ENCODE measurements at regions of chr2 and their contacts with region 1.

Region 1: DNA sequence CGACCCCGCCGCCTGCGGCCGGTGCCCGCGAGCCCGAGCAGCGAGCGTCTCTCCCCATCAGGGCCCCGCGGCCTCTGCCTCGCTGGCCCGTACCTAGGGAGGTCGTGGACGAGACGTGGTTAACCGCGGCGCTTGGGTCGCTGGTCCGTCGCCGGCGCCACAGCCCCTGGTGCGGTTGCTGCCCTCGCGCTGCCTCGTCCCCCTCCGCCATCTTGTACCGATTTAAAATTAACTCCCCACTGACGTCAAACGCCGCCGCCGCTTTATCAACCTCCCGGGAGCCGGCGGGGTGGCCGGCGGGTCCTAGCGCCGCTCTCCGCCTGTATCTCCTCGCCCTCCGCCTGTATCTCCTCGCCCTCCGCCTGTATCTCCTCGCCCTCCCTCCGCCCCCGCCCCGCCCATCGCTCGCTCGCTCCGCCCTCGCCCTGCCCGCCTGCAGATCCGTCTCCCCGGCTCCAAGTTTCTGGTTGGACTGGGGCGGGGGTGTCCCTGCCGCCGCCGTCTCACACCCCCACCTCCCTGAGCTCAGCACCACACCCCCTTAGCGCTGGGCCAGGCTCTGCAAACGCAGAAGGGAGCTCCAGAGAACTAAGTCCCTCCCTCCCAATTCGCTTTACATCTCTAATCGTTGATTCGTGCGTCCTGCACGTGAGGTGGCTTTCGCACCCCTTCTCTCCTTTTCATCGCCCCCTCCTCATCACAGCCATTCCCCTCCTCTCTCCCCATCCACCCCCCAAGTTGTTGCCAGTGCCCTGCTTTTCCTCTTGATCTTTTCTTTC is at the start of gene ATL2:
- DNase-seq: peak; percentile 91
- ATAC-seq: peak; percentile 85
- H3K4me3 ChIP-seq: peak within 1 kb of the TSS; percentile 95 to 100 (median 99)
- H3K27ac ChIP-seq: peak within 1 kb of the TSS; percentile 90
- H3K4me1 ChIP-seq: peaks cover 74% of the 10 kb centered on the region
- H3K27me3 ChIP-seq: no peaks in the 10 kb centered on the region; a peak in 1 of 5 replicates
- CTCF ChIP-seq: no peak; the same call in 1 of the 2 replicates
- EP300 ChIP-seq: peak in 1 of 2 experiments; percentile 53; a peak in 3 of 4 replicates
- POLR2A ChIP-seq: peak; percentile 92 to 96
- RAD21 ChIP-seq: peak; percentile 77; the same call in 1 of the 2 replicates
- total RNA-seq, gene ATL2: 110 and 119 TPM in 2 replicates

Region 2: GRCh38 chr2:38201784-38202183 is 175.5 kb before region 1 on chr2:
- CTCF ChIA-PET with region 1: no interaction called
- POLR2A ChIA-PET with region 1: no interaction called
- in situ Hi-C with region 1: no loop called
- intact Hi-C with region 1: no loop called
- DNase-seq: no peak
- ATAC-seq: no peak
- H3K4me3 ChIP-seq: no peak overlapping the region
- H3K27ac ChIP-seq: no peak overlapping the region
- H3K4me1 ChIP-seq: no peaks in the 10 kb centered on the region
- H3K27me3 ChIP-seq: peaks cover 0 to 14% of the 10 kb centered on the region in 2 experiments; a peak in 1 of 5 replicates
- CTCF ChIP-seq: no peak
- EP300 ChIP-seq: no peak
- POLR2A ChIP-seq: no peak
- RAD21 ChIP-seq: no peak

Region 3: DNA sequence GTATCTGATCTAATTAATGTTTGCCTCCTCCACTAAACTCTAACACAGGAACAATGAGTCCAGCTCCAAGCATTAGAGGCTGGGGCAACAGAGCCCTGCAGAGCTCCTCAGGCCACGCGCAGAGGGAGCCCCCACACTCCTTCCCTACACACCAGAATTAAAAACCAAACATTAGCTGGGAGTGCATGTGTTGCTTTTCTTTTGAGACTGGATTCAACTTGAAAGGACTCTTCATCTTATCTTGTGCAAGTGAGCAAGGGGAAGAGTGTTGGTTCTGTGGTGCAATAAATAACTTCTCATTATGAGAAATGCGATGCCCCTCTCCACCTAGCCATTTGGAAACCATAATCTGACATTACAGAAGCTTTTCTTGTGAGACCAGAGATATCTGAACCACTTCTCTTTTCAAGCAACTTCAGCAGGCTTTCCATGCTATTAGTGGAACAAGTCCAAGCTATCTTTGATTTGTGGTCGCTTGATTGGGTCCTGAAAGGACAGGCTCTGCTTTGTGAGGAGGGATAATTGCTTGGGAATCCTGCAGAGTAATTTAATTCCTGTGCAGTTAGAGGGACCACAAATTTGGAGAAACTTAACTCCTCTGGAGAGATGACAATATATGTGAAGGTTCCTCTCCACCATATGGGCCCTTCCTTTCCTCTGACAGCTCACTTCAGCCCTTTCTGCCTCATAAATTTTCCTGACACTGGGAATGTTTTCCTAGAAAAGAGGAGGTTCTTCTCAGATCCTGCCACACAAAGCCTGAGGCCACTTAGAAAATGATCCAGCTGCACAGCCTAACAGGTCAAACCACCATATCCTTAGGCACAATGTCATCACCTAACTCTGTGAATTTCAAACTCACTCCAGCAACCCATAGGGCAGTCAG is 112.6 kb before region 1 on chr2:
- CTCF ChIA-PET with region 1: no interaction called
- POLR2A ChIA-PET with region 1: no interaction called
- in situ Hi-C with region 1: no loop called
- intact Hi-C with region 1: no loop called
- DNase-seq: no peak
- ATAC-seq: peak; percentile 48; the same call in 2 of the 3 replicates
- H3K4me3 ChIP-seq: no peak overlapping the region
- H3K27ac ChIP-seq: no peak overlapping the region
- H3K4me1 ChIP-seq: no peaks in the 10 kb centered on the region
- H3K27me3 ChIP-seq: peaks cover 0 to 22% of the 10 kb centered on the region in 2 experiments; a peak in 3 of 5 replicates
- CTCF ChIP-seq: peak; percentile 25; the same call in 1 of the 2 replicates
- EP300 ChIP-seq: no peak
- POLR2A ChIP-seq: no peak
- RAD21 ChIP-seq: no peak

Region 4: GRCh38 chr2:38344813-38345212 is 32.4 kb before region 1 on chr2:
- CTCF ChIA-PET with region 1: no interaction called
- POLR2A ChIA-PET with region 1: no interaction called
- in situ Hi-C with region 1: no loop called
- intact Hi-C with region 1: loop called (anchors 5 kb)
- DNase-seq: no peak
- ATAC-seq: peak; percentile 13; the same call in 1 of the 3 replicates
- H3K4me3 ChIP-seq: no peak overlapping the region
- H3K27ac ChIP-seq: peak overlapping the region; percentile 48
- H3K4me1 ChIP-seq: peaks cover 26% of the 10 kb centered on the region
- H3K27me3 ChIP-seq: no peaks in the 10 kb centered on the region
- CTCF ChIP-seq: no peak
- EP300 ChIP-seq: no peak
- POLR2A ChIP-seq: no peak
- RAD21 ChIP-seq: no peak

Region 5: GRCh38 chr2:38432820-38433606 is 55.8 kb after region 1 on chr2:
- CTCF ChIA-PET with region 1: no interaction called
- POLR2A ChIA-PET with region 1: interaction called, 7 read pairs
- in situ Hi-C with region 1: no loop called
- intact Hi-C with region 1: loop called (anchors 2 kb)
- DNase-seq: peak; percentile 92
- ATAC-seq: peak; percentile 94
- H3K4me3 ChIP-seq: peak overlapping the region in 1 of 3 experiments; percentile 1; a peak in 1 of 6 replicates
- H3K27ac ChIP-seq: peak overlapping the region; percentile 64
- H3K4me1 ChIP-seq: peaks cover 68% of the 10 kb centered on the region
- H3K27me3 ChIP-seq: no peaks in the 10 kb centered on the region; a peak in 1 of 5 replicates
- CTCF ChIP-seq: peak; percentile 21; the same call in 1 of the 2 replicates
- EP300 ChIP-seq: peak; percentile 80 to 92; a peak in 3 of 4 replicates
- POLR2A ChIP-seq: no peak
- RAD21 ChIP-seq: peak; percentile 60

Region 6: DNA sequence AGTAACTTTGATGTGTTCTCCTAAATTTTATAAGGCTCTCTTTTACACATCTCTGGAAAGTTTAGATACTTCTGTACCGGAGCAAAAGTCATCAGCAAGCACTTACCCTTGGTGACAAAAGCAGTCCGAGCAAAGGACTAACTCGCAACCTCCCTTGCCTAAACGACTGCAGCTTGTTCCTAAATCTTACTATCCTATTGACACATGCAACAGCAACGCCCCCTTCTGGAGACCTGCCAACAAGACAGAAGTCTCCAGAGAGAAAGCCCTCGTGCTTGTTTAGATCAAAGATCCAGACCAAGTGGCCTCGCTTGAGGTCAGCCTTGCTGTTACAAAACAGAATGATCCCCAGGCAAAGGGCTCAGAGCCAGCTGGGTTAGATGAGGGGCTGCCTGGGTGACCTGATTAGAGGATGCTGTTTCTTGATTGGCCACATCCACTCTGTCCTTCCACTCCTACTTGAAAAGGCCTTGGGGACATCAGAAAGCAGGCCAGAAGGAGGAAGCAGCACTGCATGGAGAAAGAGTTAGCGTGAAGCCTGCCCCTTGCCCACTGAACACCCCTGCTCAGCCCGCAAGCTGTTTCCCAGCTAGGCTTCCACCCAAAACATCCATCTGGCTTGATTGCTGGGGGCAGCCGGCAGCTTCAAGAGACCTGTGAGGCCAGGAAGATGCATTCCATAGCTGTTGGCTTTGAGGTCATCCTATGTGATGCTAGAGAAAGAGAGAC is 131.2 kb after region 1 on chr2:
- CTCF ChIA-PET with region 1: interaction called, 3 read pairs
- POLR2A ChIA-PET with region 1: interaction called, 5 read pairs
- in situ Hi-C with region 1: no loop called
- intact Hi-C with region 1: loop called (anchors 5 kb)
- DNase-seq: peak; percentile 95
- ATAC-seq: peak; percentile 87
- H3K4me3 ChIP-seq: no peak overlapping the region
- H3K27ac ChIP-seq: no peak overlapping the region
- H3K4me1 ChIP-seq: peaks cover 30% of the 10 kb centered on the region
- H3K27me3 ChIP-seq: no peaks in the 10 kb centered on the region
- CTCF ChIP-seq: peak; percentile 97
- EP300 ChIP-seq: 0 out of 4 replicates have a peak, but pooled peaks of 1 of the 2 experiments have one; percentile 24
- POLR2A ChIP-seq: no peak
- RAD21 ChIP-seq: peak; percentile 96